ENCODE measurements at regions of chr15 and their contacts with region 1.

Region 1: DNA sequence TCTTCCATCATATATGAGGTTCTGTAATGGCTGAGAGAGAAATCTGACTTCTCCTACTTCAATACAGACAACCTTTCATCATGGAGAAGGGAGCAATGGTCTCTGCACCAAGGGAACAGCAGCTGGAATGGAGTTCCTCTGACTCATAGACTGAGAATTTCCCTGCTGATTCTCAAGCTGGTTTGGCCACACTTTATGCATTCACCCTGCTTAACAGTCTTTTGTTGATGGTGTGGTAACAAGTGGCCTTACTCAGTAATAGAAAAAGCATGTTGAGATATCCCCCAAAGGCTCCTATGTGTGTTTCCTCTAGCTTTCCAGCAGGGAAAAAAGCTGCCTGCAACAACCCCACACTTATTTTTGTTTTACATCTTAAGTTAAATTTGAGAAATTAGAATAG is 138.1 kb downstream of the GREM1 start:
- DNase-seq: peak; percentile 99
- H3K4me3 ChIP-seq: no peak overlapping the region
- CTCF ChIP-seq: peak; percentile 1

Region 2: GRCh38 chr15:32677238-32677750 is 178.6 kb before region 1 on chr15:
- CTCF ChIA-PET with region 1: no interaction called
- POLR2A ChIA-PET with region 1: no interaction called
- DNase-seq: no peak
- H3K4me3 ChIP-seq: no peak overlapping the region
- CTCF ChIP-seq: no peak

Region 3: GRCh38 chr15:32844118-32844711 is 11.7 kb before region 1 on chr15:
- CTCF ChIA-PET with region 1: interaction called, 31 read pairs
- POLR2A ChIA-PET with region 1: interaction called, 23 read pairs
- DNase-seq: no peak
- H3K4me3 ChIP-seq: no peak overlapping the region
- CTCF ChIP-seq: peak; percentile 48

Region 4: GRCh38 chr15:32943711-32944110 is 87.8 kb after region 1 on chr15:
- CTCF ChIA-PET with region 1: no interaction called
- POLR2A ChIA-PET with region 1: no interaction called
- DNase-seq: peak; percentile 16
- H3K4me3 ChIP-seq: no peak overlapping the region
- CTCF ChIP-seq: no peak

Region 5: GRCh38 chr15:33292717-33293307 is 436.9 kb after region 1 on chr15:
- CTCF ChIA-PET with region 1: no interaction called
- POLR2A ChIA-PET with region 1: no interaction called
- DNase-seq: no peak
- H3K4me3 ChIP-seq: no peak overlapping the region
- CTCF ChIP-seq: peak; percentile 62